ENCODE measurements at regions of chr16 and their contacts with region 1.

Region 1: GRCh38 chr16:58814348-58814801 is 80.3 kb upstream of the GOT2 start:
- DNase-seq: peak; percentile 47
- H3K4me3 Mint-ChIP-seq: peak overlapping the region; percentile 33
- H3K27ac Mint-ChIP-seq: no peak overlapping the region
- H3K4me1 Mint-ChIP-seq: peaks cover 5% of the 10 kb centered on the region
- H3K27me3 Mint-ChIP-seq: peaks cover 6% of the 10 kb centered on the region

Region 2: GRCh38 chr16:58789351-58789750 is 25.0 kb before region 1 on chr16:
- CTCF ChIA-PET with region 1: no interaction called
- POLR2A ChIA-PET with region 1: no interaction called
- intact Hi-C with region 1: no loop called
- DNase-seq: no peak
- H3K4me3 Mint-ChIP-seq: no peak overlapping the region
- H3K27ac Mint-ChIP-seq: no peak overlapping the region
- H3K4me1 Mint-ChIP-seq: no peaks in the 10 kb centered on the region
- H3K27me3 Mint-ChIP-seq: peaks cover 5% of the 10 kb centered on the region

Region 3: DNA sequence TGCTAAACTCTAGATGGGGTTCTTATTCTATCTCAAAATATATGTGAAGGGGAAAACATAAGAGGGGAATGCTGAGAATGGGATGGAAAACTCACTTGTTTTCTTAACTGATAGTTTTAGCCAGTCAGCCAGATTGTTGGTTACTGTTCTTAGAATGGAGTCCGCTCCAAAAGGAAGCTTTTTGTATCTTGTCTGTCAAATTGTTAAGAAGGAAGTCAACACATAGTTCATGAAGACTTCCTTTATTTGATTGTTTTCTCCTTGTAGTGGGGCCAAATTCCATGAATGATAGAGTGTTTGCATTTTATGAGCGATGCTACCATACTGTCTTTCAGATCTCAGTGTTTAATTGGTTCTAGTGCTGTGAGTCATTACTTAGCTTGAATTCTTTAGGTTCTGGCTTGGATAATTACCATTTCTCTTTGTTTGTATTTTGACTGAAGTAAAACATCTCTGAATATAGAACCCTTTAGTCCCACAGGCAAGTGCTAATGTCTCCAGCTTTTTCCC is 18.1 kb after region 1 on chr16:
- CTCF ChIA-PET with region 1: interaction called, 11 read pairs
- POLR2A ChIA-PET with region 1: no interaction called
- intact Hi-C with region 1: no loop called
- DNase-seq: no peak
- H3K4me3 Mint-ChIP-seq: no peak overlapping the region
- H3K27ac Mint-ChIP-seq: no peak overlapping the region
- H3K4me1 Mint-ChIP-seq: no peaks in the 10 kb centered on the region
- H3K27me3 Mint-ChIP-seq: peaks cover 8% of the 10 kb centered on the region

Measured in activated CD4-positive, alpha-beta memory T cell treated with anti-CD3 and anti-CD28 coated beads for 36 hours (primary cell).